ENCODE measurements at regions of chr9 and their contacts with region 1.

Region 1: DNA sequence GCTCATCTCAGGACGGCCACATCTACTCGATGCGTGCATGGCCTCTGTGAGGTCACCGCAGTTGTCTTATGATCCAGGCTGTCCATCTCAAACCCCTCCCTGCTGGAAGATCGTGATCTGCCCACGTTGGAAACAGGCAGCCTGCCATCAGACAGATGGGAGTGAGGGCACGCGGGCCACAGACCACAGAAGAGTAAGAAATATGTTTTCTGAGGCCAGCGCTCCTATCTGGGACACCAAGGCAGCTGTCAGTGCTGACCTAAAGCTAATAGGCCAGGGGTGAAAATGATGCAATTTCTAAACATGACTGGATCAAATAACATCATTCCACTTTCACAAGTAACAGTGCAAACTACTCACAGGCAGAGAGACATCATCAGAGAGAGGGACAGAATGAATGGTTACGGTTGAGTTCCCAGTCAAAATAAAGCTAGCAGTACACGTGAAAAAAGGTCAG is 57.1 kb upstream of the CER1 start:
- DNase-seq: peak; percentile 70 to 82
- ATAC-seq: peak; percentile 86 to 91 (median 91)
- H3K4me3 ChIP-seq: peak overlapping the region; percentile 35
- H3K27ac ChIP-seq: peak overlapping the region; percentile 96
- H3K4me1 ChIP-seq: peaks cover 46% of the 10 kb centered on the region
- H3K27me3 ChIP-seq: no peaks in the 10 kb centered on the region
- CTCF ChIP-seq: no peak

Region 2: DNA sequence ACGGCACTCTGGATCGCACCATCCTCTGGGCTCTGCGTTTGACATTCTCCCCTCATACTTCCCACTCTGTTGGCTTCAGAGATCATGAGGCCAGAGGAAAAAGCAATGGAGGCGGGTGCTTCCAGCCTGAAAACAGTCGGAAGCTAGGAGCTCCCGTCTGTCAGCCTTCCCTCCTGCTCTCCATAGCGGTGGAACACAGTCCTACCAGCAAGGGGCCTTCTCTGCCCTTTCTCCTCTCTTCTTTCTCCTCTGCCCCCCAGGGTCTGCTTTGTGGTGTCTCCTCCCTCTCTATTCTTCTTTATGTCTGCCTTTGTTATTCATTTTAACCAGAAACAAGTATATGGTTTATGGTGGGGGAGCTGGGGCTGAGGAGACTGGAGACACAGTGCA is 313.2 kb before region 1 on chr9:
- intact Hi-C with region 1: loop called in 1 of 2 experiments (anchors 10 kb)
- DNase-seq: no peak
- ATAC-seq: no peak
- H3K4me3 ChIP-seq: no peak overlapping the region
- H3K27ac ChIP-seq: no peak overlapping the region
- H3K4me1 ChIP-seq: no peaks in the 10 kb centered on the region
- H3K27me3 ChIP-seq: no peaks in the 10 kb centered on the region
- CTCF ChIP-seq: no peak

Region 3: GRCh38 chr9:14766299-14766698 is 13.3 kb before region 1 on chr9:
- intact Hi-C with region 1: no loop called
- DNase-seq: no peak
- ATAC-seq: no peak
- H3K4me3 ChIP-seq: no peak overlapping the region
- H3K27ac ChIP-seq: no peak overlapping the region
- H3K4me1 ChIP-seq: peaks cover 4% of the 10 kb centered on the region
- H3K27me3 ChIP-seq: no peaks in the 10 kb centered on the region
- CTCF ChIP-seq: no peak

Region 4: GRCh38 chr9:14824481-14824880 is 44.9 kb after region 1 on chr9:
- intact Hi-C with region 1: no loop called
- DNase-seq: no peak
- ATAC-seq: no peak
- H3K4me3 ChIP-seq: no peak overlapping the region
- H3K27ac ChIP-seq: no peak overlapping the region
- H3K4me1 ChIP-seq: no peaks in the 10 kb centered on the region
- H3K27me3 ChIP-seq: no peaks in the 10 kb centered on the region
- CTCF ChIP-seq: no peak

Region 5: DNA sequence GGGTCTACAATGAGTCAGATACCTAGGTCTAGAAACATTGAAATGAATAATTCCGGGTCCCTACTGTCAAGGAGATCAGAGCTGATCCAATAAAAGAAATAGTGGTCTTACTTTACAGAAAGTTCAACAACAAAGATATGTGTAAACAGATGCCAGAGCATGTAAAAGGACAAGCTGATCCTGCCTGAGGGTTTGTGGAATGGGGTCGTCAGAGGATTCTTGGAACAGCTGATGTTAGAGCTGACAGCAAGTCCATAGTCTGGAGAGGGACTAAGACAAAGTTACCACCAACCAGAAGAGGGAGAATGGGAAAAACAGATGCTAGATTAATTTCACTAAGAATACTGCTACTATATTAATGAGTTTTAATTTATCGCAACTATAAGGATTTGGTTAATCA is 59.1 kb after region 1 on chr9:
- intact Hi-C with region 1: loop called in 1 of 2 experiments (anchors 10 kb)
- DNase-seq: no peak
- ATAC-seq: no peak
- H3K4me3 ChIP-seq: no peak overlapping the region
- H3K27ac ChIP-seq: no peak overlapping the region
- H3K4me1 ChIP-seq: no peaks in the 10 kb centered on the region
- H3K27me3 ChIP-seq: no peaks in the 10 kb centered on the region
- CTCF ChIP-seq: no peak

Region 6: DNA sequence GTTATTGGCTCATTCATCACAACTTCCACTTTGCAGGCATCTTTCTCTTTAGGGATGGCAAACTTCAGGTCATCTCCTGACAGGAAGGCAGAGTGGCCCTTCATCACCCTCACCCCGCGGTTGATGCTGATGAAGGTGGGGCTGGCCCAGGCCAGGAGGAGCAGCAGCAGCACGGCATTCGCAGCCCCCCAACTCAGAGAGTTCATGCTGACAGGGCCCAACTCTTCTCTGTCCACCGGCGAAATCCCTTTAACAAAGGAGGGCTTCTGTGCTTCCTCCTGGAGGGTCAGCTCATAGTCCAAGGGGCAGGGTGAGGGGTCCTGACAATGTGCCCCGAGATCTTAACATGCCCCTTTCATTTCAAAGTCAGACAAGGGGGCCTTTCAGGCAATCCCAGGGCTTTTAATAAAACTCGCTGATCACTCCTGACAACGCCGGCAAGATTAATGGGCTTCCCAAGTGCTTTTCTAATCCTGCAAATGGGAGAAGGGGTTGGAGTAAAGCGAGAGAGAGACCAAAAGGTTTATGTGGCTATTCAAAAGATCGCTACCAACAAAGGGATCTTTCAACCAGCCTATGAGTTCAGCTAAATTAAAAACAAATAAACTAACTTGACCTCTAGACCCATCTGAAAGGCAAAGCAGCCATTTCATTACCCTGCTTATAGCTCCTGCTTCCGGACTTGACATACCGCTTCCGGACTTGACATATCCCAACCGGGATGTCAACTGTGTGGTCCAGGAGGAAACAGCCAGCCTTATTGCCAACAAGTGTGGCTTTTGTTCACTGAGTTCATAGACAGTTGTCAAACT is 89.4 kb after region 1 on chr9:
- intact Hi-C with region 1: no loop called
- DNase-seq: no peak
- ATAC-seq: no peak
- H3K4me3 ChIP-seq: no peak overlapping the region
- H3K27ac ChIP-seq: no peak overlapping the region
- H3K4me1 ChIP-seq: no peaks in the 10 kb centered on the region
- H3K27me3 ChIP-seq: no peaks in the 10 kb centered on the region
- CTCF ChIP-seq: no peak

Region 7: DNA sequence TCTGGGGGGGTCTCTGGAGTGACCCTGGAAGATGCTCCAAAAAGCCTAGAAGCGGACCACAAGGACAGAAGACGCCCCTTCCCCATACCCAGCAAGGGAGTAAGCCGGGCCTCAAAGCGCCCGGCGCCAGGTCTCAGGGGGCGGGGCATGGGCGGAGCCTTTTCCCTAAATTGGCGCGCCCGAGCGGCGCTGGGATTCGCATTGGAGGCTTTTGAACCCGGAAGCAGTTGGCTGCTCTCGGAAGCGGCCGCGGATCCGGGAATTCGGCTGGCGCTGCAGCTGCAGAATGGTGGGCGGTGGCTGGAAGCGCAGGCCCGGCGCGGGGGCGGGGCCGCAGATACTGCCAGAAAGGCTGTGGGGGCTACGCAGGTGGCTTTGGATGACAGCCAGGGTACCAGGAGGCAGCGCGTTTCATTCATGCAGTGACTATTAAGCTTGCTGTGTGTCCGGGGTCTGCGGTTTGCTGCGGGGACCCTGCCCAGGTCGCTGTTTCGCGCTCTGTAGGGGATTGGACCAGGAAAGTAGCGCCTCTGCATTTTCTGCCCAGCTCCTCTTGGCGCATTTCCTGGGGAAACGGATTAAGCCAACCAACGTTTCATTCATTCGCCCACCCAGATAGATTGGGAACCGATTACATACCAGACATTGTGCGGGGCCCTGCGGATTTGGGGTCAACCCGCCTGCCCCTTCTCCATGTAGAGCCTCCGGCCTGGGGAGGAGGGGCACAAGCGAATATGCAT is 213.6 kb after region 1 on chr9:
- intact Hi-C with region 1: loop called in 1 of 2 experiments (anchors 10 kb)
- DNase-seq: peak; percentile 85 to 93
- ATAC-seq: peak; percentile 94 to 99 (median 97)
- H3K4me3 ChIP-seq: peak overlapping the region; percentile 83
- H3K27ac ChIP-seq: peak overlapping the region; percentile 55
- H3K4me1 ChIP-seq: peaks cover 6% of the 10 kb centered on the region
- H3K27me3 ChIP-seq: no peaks in the 10 kb centered on the region
- CTCF ChIP-seq: no peak

Region 8: GRCh38 chr9:15116130-15116580 is 336.6 kb after region 1 on chr9:
- intact Hi-C with region 1: loop called in 1 of 2 experiments (anchors 10 kb)
- DNase-seq: no peak
- ATAC-seq: peak in 2 of 4 donors; percentile 74 to 79
- H3K4me3 ChIP-seq: peak overlapping the region; percentile 47
- H3K27ac ChIP-seq: peak overlapping the region; percentile 70
- H3K4me1 ChIP-seq: peaks cover 14% of the 10 kb centered on the region
- H3K27me3 ChIP-seq: no peaks in the 10 kb centered on the region
- CTCF ChIP-seq: no peak

Region 9: GRCh38 chr9:15422372-15423230 is 643.0 kb after region 1 on chr9 and contains the start of gene SNAPC3:
- intact Hi-C with region 1: loop called in 1 of 2 experiments (anchors 10 kb)
- DNase-seq: peak; percentile 94 to 97
- ATAC-seq: peak; percentile 99
- H3K4me3 ChIP-seq: peak within 1 kb of the TSS; percentile 98
- H3K27ac ChIP-seq: peak within 1 kb of the TSS; percentile 92
- H3K4me1 ChIP-seq: peaks cover 24% of the 10 kb centered on the region
- H3K27me3 ChIP-seq: no peaks in the 10 kb centered on the region
- CTCF ChIP-seq: no peak
- total RNA-seq, gene SNAPC3: 19.9 to 29.2 (median 20.8) TPM

Measured in psoas muscle (tissue), 8 donors.